ENCODE measurements at regions of chr10 and their contacts with region 1.

Region 1: GRCh38 chr10:27446091-27446918 is 57.8 kb upstream of the RAB18 start:
- DNase-seq: peak; percentile 31
- H3K4me3 ChIP-seq: no peak overlapping the region
- H3K27ac ChIP-seq: no peak overlapping the region
- H3K4me1 ChIP-seq: peaks cover 6% of the 10 kb centered on the region
- H3K27me3 ChIP-seq: no peaks in the 10 kb centered on the region
- CTCF ChIP-seq: peak; percentile 26 to 52

Region 2: DNA sequence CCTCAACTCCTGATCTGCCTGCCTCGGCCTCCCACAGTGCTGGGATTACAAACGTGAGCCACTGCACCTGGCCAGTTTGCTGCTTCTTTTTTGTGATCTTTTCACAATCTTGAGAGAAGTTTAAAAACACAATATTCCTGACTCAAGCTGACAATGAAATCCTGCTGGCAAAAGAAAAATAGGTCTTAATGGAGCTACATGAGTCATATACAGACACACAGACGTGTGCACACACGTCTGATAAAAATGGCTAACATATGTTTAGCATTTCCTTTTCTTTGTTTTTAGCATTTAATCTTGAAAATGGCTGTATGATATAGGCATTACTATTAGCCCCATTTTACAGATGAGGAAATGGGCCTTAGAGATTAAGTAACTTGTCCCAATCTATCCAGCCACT is 28.4 kb after region 1 on chr10:
- CTCF ChIA-PET with region 1: no interaction called
- dilution Hi-C with region 1: no loop called
- in situ Hi-C with region 1: no loop called
- intact Hi-C with region 1: loop called (anchors 2 kb)
- DNase-seq: peak; percentile 76
- H3K4me3 ChIP-seq: no peak overlapping the region
- H3K27ac ChIP-seq: peak overlapping the region; percentile 76
- H3K4me1 ChIP-seq: peaks cover 25% of the 10 kb centered on the region
- H3K27me3 ChIP-seq: no peaks in the 10 kb centered on the region
- CTCF ChIP-seq: no peak

Region 3: GRCh38 chr10:27490807-27491206 is 44.5 kb after region 1 on chr10:
- CTCF ChIA-PET with region 1: interaction called, 5 read pairs
- dilution Hi-C with region 1: no loop called
- in situ Hi-C with region 1: loop called in 1 of 2 experiments (anchors 10 kb)
- intact Hi-C with region 1: loop called (anchors 1 kb)
- DNase-seq: peak; percentile 35
- H3K4me3 ChIP-seq: no peak overlapping the region
- H3K27ac ChIP-seq: no peak overlapping the region
- H3K4me1 ChIP-seq: peaks cover 12% of the 10 kb centered on the region
- H3K27me3 ChIP-seq: no peaks in the 10 kb centered on the region
- CTCF ChIP-seq: no peak

Region 4: GRCh38 chr10:27542812-27543211 is 96.5 kb after region 1 on chr10:
- CTCF ChIA-PET with region 1: no interaction called
- dilution Hi-C with region 1: no loop called
- in situ Hi-C with region 1: loop called in 1 of 2 experiments (anchors 10 kb)
- intact Hi-C with region 1: loop called (anchors 5 kb)
- DNase-seq: peak; percentile 6
- H3K4me3 ChIP-seq: no peak overlapping the region
- H3K27ac ChIP-seq: no peak overlapping the region
- H3K4me1 ChIP-seq: peaks cover 11% of the 10 kb centered on the region
- H3K27me3 ChIP-seq: no peaks in the 10 kb centered on the region
- CTCF ChIP-seq: no peak

Region 5: DNA sequence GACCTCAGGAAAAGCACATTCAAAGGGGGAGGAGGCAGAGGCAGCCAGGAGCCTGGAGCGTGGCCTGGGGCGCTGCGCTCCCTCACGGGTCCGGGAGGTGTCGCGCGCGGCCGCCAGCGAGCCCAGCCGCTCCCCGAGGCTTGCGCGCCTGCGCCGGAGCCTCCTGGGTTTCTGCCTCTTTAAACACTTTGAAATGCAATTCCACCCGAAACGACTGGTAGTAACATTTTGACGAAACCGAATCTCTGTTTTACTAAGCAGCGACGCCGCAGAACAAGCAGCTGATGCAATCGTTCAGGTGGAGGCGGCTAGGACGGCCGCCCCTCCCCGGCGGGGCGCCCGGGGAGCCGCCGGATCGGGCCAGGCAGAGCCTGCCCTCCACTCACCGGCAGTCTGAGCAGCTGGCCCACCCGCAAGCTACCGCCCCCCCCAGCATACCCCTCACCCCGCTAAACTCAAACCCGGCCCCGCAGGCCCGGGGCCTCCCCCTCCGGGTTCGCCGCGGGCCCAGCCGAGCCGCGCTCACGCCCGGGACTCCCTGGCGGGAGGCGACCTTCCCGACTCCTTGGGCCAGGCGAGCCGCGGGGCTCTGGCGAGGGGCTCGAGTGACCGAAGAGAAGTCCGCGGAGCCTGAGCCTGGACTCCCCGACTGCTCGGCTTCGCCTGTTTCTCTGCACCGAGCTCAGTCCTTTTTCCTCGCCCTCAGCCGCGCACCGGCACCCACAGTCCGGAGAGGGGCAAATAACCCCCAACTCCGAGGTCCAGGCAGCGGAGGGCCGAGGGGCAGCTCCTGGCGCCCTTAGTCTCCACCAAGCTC is 296.1 kb after region 1 on chr10:
- CTCF ChIA-PET with region 1: no interaction called
- dilution Hi-C with region 1: no loop called
- in situ Hi-C with region 1: no loop called
- intact Hi-C with region 1: loop called (anchors 10 kb)
- DNase-seq: peak; percentile 63
- H3K4me3 ChIP-seq: peak overlapping the region; percentile 41 to 47 (median 43)
- H3K27ac ChIP-seq: no peak overlapping the region
- H3K4me1 ChIP-seq: peaks cover 26% of the 10 kb centered on the region
- H3K27me3 ChIP-seq: peaks cover 48% of the 10 kb centered on the region
- CTCF ChIP-seq: peak; percentile 35 to 60

Region 6: GRCh38 chr10:28008054-28008453 is 561.7 kb after region 1 on chr10:
- CTCF ChIA-PET with region 1: no interaction called
- dilution Hi-C with region 1: no loop called
- in situ Hi-C with region 1: no loop called
- intact Hi-C with region 1: no loop called
- DNase-seq: no peak
- H3K4me3 ChIP-seq: no peak overlapping the region
- H3K27ac ChIP-seq: no peak overlapping the region
- H3K4me1 ChIP-seq: no peaks in the 10 kb centered on the region
- H3K27me3 ChIP-seq: no peaks in the 10 kb centered on the region
- CTCF ChIP-seq: no peak

Region 7: DNA sequence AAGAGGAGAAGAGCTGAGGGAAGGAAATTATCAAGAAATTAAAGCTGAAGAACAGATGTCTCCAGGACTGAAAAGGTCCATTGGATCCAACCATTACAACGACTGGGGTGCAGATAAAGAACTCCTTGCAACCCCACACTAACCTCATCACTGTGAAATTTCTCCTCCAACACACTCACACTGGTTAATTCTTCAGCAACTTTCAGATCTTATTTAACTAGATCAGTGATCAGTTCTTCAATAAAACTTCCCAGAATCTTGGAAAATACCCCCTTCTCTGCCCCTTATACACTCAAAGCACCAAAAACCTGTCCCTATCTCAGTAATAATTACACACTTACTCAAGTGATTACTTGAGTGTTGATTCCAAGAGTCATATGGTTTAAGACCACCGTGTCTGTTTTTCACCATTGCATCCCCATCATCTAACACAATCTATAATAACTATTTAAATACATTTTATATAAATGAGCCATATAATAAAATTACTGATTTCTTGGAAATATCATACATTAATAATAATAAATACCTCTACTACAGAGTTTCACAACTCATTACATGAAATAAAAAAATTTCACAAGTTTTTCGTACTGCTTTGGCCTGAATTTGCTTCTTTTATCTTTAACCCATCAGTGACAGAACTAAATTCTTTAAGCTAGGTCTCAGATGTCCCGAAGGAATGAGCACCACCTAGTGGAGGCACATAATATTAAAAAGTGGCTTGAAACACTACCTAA is 732.9 kb after region 1 on chr10:
- CTCF ChIA-PET with region 1: no interaction called
- dilution Hi-C with region 1: no loop called
- in situ Hi-C with region 1: no loop called
- intact Hi-C with region 1: loop called (anchors 2 kb)
- DNase-seq: peak; percentile 26
- H3K4me3 ChIP-seq: no peak overlapping the region
- H3K27ac ChIP-seq: no peak overlapping the region
- H3K4me1 ChIP-seq: peaks cover 5% of the 10 kb centered on the region
- H3K27me3 ChIP-seq: no peaks in the 10 kb centered on the region
- CTCF ChIP-seq: peak; percentile 57 to 68